K562 (cell line): ENCODE measurements at regions of chr10 and their contacts with region 1.

Region 1: GRCh38 chr10:69222157-69223027 is 2.3 kb downstream of the HKDC1 start:
- DNase-seq: peak; percentile 82 to 93 (median 86)
- ATAC-seq: peak; percentile 92
- H3K4me3 ChIP-seq: peak overlapping the region; percentile 24
- H3K27ac ChIP-seq: peak overlapping the region; percentile 94
- H3K4me1 ChIP-seq: peaks cover 9 to 23% of the 10 kb centered on the region in 2 experiments; a peak in 4 of 5 replicates
- H3K27me3 ChIP-seq: no peaks in the 10 kb centered on the region
- CTCF ChIP-seq: peak; percentile 88 to 94 (median 91)
- EP300 ChIP-seq: peak; percentile 61
- POLR2A ChIP-seq: peak; percentile 72
- RAD21 ChIP-seq: peak; percentile 74 to 85

Region 2: GRCh38 chr10:68973975-68974374 is 248.4 kb before region 1 on chr10:
- CTCF ChIA-PET with region 1: no interaction called
- POLR2A ChIA-PET with region 1: no interaction called
- in situ Hi-C with region 1: no loop called
- intact Hi-C with region 1: no loop called
- DNase-seq: no peak
- ATAC-seq: no peak
- H3K4me3 ChIP-seq: no peak overlapping the region
- H3K27ac ChIP-seq: no peak overlapping the region
- H3K4me1 ChIP-seq: no peaks in the 10 kb centered on the region
- H3K27me3 ChIP-seq: no peaks in the 10 kb centered on the region
- CTCF ChIP-seq: no peak
- EP300 ChIP-seq: no peak
- POLR2A ChIP-seq: 0 out of 2 replicates have a peak, but pooled peaks have one; percentile 39
- RAD21 ChIP-seq: no peak

Region 3: DNA sequence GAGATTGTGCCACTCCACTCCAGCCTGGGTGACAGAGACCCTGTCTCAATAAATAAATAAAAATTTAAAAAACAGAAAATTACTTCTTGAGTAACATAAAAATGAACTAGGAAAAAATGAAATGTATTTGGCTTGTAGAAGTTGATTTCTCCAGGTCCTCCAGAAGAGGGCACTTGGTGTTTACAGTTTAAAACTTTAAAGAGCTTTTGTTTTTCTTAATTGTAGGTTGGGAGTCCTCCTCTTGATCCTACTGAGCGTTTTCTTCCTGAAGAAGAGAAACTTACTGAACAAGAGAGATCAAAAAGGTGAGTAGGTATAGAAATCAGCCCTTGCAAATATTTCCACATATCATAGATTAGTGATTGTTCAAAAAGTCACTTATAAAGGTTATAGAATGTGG is 217.6 kb before region 1 on chr10:
- CTCF ChIA-PET with region 1: interaction called, 5 read pairs
- POLR2A ChIA-PET with region 1: no interaction called
- in situ Hi-C with region 1: no loop called
- intact Hi-C with region 1: loop called (anchors 1 kb)
- DNase-seq: peak in 2 of 4 experiments; percentile 38 to 56
- ATAC-seq: peak; percentile 83
- H3K4me3 ChIP-seq: no peak overlapping the region
- H3K27ac ChIP-seq: no peak overlapping the region
- H3K4me1 ChIP-seq: no peaks in the 10 kb centered on the region
- H3K27me3 ChIP-seq: no peaks in the 10 kb centered on the region
- CTCF ChIP-seq: peak; percentile 54 to 90 (median 62); a peak in 5 of 6 replicates
- EP300 ChIP-seq: no peak
- POLR2A ChIP-seq: no peak
- RAD21 ChIP-seq: peak; percentile 91 to 98

Region 4: GRCh38 chr10:69728335-69728870 is 506.0 kb after region 1 on chr10:
- CTCF ChIA-PET with region 1: no interaction called
- POLR2A ChIA-PET with region 1: no interaction called
- in situ Hi-C with region 1: no loop called
- intact Hi-C with region 1: no loop called
- DNase-seq: no peak
- ATAC-seq: no peak
- H3K4me3 ChIP-seq: no peak overlapping the region
- H3K27ac ChIP-seq: no peak overlapping the region
- H3K4me1 ChIP-seq: peaks cover 0 to 4% of the 10 kb centered on the region in 2 experiments; a peak in 4 of 5 replicates
- H3K27me3 ChIP-seq: peaks cover 5 to 42% of the 10 kb centered on the region in 2 experiments; a peak in 3 of 5 replicates
- CTCF ChIP-seq: no peak
- EP300 ChIP-seq: no peak
- POLR2A ChIP-seq: no peak
- RAD21 ChIP-seq: no peak